ENCODE measurements at regions of chr15 and their contacts with region 1.

Region 1: DNA sequence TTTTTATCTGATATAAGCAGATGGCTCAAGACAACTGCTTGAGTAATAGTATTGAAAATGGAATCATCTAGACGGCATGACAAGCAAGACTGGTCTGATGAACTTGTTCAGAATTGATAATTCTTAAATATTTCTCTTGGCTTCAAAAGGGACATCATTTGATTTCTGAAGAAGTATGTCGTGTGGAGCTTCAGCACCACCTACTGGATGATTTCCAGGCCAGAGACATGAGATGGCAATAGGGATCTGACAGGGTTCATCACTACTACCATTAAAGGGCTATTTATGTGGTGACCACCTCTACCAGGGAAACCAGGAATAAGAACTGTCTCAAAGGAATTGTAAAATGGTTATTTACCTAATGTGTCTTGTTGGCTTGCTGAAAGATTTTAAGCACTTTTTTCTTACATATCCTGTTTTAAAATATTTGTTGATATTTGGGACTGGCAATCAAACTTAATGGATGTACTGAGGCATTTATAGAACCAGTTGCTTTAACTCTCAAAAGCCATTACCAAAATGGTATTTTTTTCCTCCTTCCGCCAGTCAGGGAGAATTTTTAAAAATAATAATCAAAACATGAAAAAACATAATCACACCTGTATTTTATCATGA is 99.5 kb upstream of the FAM98B start:
- DNase-seq: no peak

Region 2: GRCh38 chr15:37995461-37996347 is 358.7 kb before region 1 on chr15:
- intact Hi-C with region 1: loop called in 1 of 2 experiments (anchors 10 kb)
- DNase-seq: no peak

Measured in posterior vena cava (tissue), 2 donors.